Breast epithelium (tissue), 4 donors: ENCODE measurements at regions of chr11 and their contacts with region 1.

Region 1: GRCh38 chr11:83441171-83441570 is 155.0 kb upstream of the CCDC90B start:
- DNase-seq: no peak
- H3K4me3 ChIP-seq: no peak overlapping the region
- H3K27ac ChIP-seq: no peak overlapping the region
- H3K4me1 ChIP-seq: no peaks in the 10 kb centered on the region
- H3K27me3 ChIP-seq: no peaks in the 10 kb centered on the region
- CTCF ChIP-seq: no peak
- POLR2A ChIP-seq: no peak

Region 2: GRCh38 chr11:82837650-82838049 is 603.5 kb before region 1 on chr11:
- intact Hi-C with region 1: loop called (anchors 5 kb)
- DNase-seq: no peak
- H3K4me3 ChIP-seq: no peak overlapping the region
- H3K27ac ChIP-seq: no peak overlapping the region
- H3K4me1 ChIP-seq: no peaks in the 10 kb centered on the region
- H3K27me3 ChIP-seq: no peaks in the 10 kb centered on the region
- CTCF ChIP-seq: no peak
- POLR2A ChIP-seq: no peak